ENCODE measurements at regions of chr1 and their contacts with region 1.

Region 1: DNA sequence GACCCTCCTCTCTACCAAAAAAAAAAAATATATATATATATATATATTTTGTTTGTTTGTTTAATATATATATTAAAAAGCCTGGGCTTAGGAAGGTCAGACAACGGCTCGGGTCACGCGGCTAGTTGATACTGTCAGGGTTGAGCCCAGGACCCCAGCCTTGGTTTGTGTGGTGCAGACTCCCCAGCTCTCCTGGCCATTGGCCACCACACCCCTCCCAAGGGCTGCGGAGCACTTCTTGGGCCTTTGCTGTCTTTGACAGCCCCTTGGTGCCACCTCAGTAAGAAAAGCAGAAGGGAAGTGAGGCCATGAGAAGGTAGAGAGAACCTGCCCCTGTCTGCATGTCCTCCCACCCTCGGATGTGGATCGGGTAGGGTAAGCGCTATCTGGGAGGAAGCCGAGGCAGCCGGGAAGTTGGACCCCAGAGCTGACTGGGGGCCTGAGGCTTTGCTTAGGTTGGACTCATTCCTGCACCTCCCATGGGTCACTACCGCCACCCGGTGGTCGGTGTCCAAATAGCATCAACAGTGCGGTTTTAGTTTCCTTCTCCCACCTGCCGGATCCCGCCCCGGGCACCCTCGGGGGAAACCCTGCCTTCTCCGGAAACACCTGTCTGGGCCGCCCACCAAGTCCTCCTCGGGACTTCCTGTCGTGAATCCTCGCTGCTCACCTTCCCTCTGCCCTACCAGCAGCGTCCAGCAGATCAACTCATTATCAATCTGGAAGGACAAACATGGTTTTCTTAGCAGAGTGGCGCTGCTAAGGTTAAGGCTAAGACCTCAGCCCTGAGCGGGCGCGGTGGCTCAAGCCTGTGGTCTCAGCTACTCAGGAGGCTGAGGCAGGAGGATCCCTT is 29.8 kb upstream of the GNPAT start:
- DNase-seq: no peak
- H3K4me3 ChIP-seq: peak overlapping the region; percentile 56
- CTCF ChIP-seq: peak; percentile 86

Region 2: DNA sequence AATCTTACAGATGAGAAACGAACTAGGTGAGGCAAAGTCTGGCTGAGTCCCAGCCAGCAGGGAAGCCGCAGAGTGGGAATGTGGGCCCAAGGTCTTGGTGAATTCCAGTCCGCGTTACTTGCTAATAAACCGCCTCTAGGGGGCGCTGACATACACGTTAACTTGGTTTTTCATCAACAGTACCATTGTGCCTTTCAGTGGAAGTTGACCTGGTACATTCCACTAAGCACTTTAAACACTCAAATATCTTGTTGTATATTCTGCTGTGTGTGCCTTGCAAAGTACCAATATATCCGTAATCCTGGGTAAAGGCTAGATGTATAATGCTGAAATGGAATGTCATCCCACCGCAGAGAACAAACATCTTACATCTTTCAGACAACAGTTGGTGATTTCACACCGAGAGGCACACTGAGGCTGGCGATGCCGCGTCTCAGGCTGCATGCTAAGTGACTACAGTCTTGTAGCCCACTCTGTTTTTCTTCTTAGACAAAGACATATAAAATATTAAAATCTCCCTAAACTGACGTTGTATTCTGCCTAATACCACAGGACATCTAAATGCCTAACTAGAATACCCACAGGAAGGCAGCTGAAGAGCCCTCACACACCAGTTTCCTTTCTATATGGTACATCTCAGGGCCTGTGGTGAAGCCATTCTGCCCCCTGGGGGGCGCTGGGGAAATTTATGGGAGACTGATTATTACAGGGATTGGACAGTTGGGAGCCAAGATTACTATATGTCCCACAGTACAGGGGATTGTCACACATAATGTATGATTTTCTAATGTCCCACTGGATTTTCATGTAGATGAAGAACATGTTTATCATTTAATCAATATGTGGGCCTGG is 293.7 kb before region 1 on chr1:
- CTCF ChIA-PET with region 1: interaction called, 42 read pairs
- POLR2A ChIA-PET with region 1: no interaction called
- DNase-seq: no peak
- H3K4me3 ChIP-seq: no peak overlapping the region
- CTCF ChIP-seq: peak; percentile 62

Region 3: GRCh38 chr1:230922620-230923019 is 288.6 kb before region 1 on chr1:
- CTCF ChIA-PET with region 1: interaction called, 42 read pairs
- POLR2A ChIA-PET with region 1: no interaction called
- DNase-seq: no peak
- H3K4me3 ChIP-seq: no peak overlapping the region
- CTCF ChIP-seq: peak; percentile 17

Region 4: DNA sequence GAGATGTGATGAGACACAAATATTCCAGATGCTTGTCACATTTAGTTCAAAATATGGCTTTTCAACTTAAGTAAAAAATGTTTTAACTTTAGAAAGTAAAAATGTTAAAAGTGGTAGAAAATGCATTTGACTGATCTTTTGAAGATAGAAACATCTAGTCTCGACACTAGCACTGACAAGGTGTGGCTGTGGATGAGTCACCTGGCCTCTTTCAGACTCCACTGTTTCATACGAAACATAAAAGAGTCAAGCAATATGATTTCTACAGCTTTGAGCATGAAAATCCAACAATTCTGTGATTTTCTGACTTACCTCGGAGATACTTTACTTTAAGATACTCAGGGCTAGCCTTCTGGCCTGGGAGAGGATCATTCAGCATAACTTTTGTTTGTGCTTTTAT is 280.2 kb before region 1 on chr1:
- CTCF ChIA-PET with region 1: interaction called, 15 read pairs
- POLR2A ChIA-PET with region 1: no interaction called
- DNase-seq: no peak
- H3K4me3 ChIP-seq: no peak overlapping the region
- CTCF ChIP-seq: no peak

Region 5: GRCh38 chr1:230957580-230957989 is 253.6 kb before region 1 on chr1:
- CTCF ChIA-PET with region 1: no interaction called
- POLR2A ChIA-PET with region 1: no interaction called
- DNase-seq: no peak
- H3K4me3 ChIP-seq: no peak overlapping the region
- CTCF ChIP-seq: no peak

Region 6: GRCh38 chr1:231091831-231092301 is 119.4 kb before region 1 on chr1:
- CTCF ChIA-PET with region 1: interaction called, 25 read pairs
- POLR2A ChIA-PET with region 1: no interaction called
- DNase-seq: no peak
- H3K4me3 ChIP-seq: no peak overlapping the region
- CTCF ChIP-seq: peak; percentile 52

Region 7: DNA sequence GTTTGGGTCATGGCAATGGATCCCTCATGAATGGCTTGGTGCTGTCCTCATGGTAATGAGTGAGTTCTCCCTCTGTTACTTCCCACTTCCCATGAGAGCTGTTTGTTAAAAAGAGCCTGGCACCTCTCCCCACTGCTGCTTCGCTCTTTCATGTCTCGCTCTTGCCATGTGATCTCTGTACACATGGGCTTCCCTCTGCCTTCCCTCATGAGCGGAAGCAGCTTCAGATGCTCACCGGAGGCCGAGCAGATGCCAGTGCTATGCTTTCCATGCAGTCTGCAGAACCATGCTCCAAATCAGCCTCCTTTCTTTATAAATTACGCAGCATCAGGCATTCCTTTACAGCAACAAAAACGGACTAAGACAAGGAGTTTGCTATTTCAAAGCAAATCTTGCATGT is 14.9 kb after region 1 on chr1:
- CTCF ChIA-PET with region 1: interaction called, 19 read pairs
- POLR2A ChIA-PET with region 1: no interaction called
- DNase-seq: no peak
- H3K4me3 ChIP-seq: no peak overlapping the region
- CTCF ChIP-seq: no peak

Region 8: DNA sequence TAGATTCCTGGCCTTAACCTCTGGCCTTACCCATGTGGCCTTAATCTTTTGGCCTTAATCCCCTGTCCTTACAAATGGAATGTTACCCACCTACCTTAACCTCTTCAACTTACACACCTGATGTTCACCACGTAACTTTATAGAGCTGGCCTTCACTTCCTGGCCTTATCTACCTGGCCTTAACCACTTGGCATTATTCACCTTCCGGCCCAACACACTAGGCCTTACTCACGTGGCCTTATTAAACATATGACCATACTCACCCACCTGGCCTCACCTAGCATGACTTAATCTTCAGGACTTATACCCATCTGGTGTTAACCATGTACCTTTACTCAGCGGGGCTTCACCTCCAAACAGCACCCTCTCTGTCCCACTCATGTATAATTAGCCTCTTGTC is 84.7 kb after region 1 on chr1:
- CTCF ChIA-PET with region 1: no interaction called
- POLR2A ChIA-PET with region 1: no interaction called
- DNase-seq: no peak
- H3K4me3 ChIP-seq: no peak overlapping the region
- CTCF ChIP-seq: no peak

Region 9: DNA sequence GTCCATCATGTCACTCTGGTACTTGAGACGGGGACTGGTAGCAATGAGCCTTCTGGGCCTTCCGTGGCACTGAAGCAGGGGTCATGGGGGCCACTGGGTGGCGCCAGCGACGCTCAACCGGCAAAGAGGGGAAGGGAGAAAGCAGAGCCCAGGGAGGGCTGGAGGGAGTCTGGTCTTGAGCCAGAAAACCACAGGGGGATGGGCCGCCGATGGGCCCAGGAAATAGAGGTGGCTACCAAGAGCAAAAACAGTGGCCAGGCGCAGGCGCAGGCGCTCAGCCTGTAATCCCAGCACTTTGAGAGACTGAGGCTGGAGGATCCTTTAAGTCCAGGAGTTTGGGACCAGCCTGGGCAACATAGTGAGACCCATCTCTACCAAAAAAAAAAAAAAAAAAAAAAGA is 104.7 kb after region 1 on chr1:
- CTCF ChIA-PET with region 1: no interaction called
- POLR2A ChIA-PET with region 1: no interaction called
- DNase-seq: no peak
- H3K4me3 ChIP-seq: no peak overlapping the region
- CTCF ChIP-seq: peak; percentile 64

Measured in AG04449 (cell line).